Lower lobe of right lung (tissue), 2 donors: ENCODE measurements at regions of chr4 and their contacts with region 1.

Region 1: GRCh38 chr4:154551872-154552686 is 1.9 kb upstream of the PLRG1 start:
- DNase-seq: peak; percentile 74
- ATAC-seq: peak; percentile 80 to 82
- H3K4me3 ChIP-seq: no peak overlapping the region
- H3K27ac ChIP-seq: no peak overlapping the region
- H3K4me1 ChIP-seq: peaks cover 25% of the 10 kb centered on the region
- H3K27me3 ChIP-seq: no peaks in the 10 kb centered on the region
- CTCF ChIP-seq: peak; percentile 92

Region 2: GRCh38 chr4:154618708-154619315 is 66.7 kb after region 1 on chr4:
- intact Hi-C with region 1: loop called (anchors 10 kb)
- DNase-seq: peak; percentile 65
- ATAC-seq: peak; percentile 61 to 76
- H3K4me3 ChIP-seq: no peak overlapping the region
- H3K27ac ChIP-seq: no peak overlapping the region
- H3K4me1 ChIP-seq: no peaks in the 10 kb centered on the region
- H3K27me3 ChIP-seq: no peaks in the 10 kb centered on the region
- CTCF ChIP-seq: peak; percentile 59